Dendritic cell treated with granulocyte-macrophage colony-stimulating factor and Interleukin-4, amounts not matched to agents 40 ng/mL and 50 ng/mL, for 4 days (primary cell): ENCODE measurements at regions of chr18 and their contacts with region 1.

Region 1: DNA sequence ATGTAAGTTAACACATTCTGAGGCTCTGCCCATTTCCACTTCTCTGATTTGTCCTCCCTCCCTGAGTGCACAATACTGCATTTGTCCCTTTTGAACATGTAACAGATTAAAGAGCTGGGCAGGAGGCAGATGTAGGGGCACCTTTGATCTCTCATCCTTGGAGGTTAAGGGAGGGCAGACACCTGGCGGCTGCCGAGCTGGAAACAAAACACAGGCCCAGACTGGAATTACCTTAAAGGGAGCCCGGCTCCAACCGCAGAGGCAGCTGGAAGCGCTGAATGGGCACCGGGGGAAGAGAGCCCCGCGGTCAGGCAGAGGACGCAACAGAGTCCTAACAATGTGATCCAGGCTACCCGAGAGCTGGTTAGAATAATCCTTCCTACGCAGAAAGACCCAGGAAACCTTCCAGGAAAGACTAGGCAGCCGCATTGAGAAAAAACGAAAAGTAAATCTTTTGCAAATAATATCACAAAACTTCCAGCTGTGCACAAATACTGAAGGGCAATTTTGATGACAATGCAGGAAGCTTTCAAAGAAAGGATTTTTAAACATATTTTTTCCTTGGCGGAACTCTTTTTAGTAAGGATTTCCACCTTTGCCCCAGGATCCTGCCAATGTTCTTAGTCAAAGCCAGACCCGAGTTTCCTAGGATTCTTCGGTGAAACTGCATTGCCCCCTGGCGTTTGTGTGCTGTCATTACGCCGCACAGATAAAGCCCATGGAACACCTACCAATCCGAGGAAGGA is 216.0 kb downstream of the TGIF1 start:
- H3K4me3 Mint-ChIP-seq: no peak overlapping the region
- H3K27ac Mint-ChIP-seq: peak overlapping the region; percentile 90
- H3K4me1 Mint-ChIP-seq: peaks cover 45% of the 10 kb centered on the region
- H3K27me3 Mint-ChIP-seq: no peaks in the 10 kb centered on the region

Region 2: GRCh38 chr18:3177902-3178687 is 487.9 kb before region 1 on chr18:
- intact Hi-C with region 1: loop called (anchors 5 kb)
- H3K4me3 Mint-ChIP-seq: peak overlapping the region; percentile 24
- H3K27ac Mint-ChIP-seq: peak overlapping the region; percentile 94
- H3K4me1 Mint-ChIP-seq: peaks cover 51% of the 10 kb centered on the region
- H3K27me3 Mint-ChIP-seq: no peaks in the 10 kb centered on the region

Region 3: GRCh38 chr18:3281456-3282400 is 384.2 kb before region 1 on chr18:
- intact Hi-C with region 1: loop called (anchors 2 kb)
- H3K4me3 Mint-ChIP-seq: no peak overlapping the region
- H3K27ac Mint-ChIP-seq: no peak overlapping the region
- H3K4me1 Mint-ChIP-seq: peaks cover 27% of the 10 kb centered on the region
- H3K27me3 Mint-ChIP-seq: no peaks in the 10 kb centered on the region

Region 4: DNA sequence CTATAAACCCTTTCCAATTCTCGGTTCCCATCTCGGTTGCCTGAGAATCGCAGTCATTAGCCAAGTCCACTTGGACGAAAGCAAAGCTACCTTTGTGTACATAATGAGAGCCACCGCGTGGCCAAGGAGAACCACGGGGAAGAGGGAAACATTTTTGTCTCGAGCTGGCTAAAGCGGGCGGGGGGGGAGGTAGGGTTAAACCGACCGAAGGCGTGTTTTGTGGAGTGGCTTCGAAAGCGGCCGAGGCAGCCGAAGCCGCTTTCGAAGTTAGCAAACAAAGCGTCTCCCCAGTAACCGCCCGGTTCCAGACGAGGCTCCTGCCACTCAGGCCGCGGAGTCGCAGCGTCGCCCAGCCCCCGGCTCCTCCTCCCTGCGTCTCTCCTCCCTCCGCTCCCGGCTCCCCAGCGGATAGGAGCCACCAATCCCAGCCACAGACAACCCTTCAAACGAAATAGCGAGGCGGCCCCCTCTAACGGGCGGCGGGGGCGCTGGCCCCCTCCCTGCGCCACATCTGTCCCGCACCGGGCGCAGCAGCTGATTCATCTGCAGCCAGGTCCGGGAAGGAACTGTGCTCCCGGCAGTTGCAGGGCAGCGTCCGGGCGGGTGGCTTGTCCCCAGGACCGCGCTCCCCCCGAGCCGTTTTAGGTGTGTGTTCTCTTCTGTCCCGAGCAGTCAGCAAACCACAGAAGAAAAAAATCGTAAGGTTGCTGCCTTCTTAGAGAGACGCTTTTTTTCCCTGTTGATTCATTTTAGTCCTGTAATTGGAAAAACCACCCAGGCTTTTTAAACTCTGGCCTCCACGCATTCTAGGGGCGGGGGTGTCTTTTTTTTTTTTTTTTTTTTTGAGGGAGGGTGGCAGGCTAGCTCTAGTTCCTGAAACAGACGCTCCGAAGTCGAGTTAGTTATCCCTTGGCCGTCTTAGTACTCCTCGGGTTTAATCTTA is 217.8 kb before region 1 on chr18:
- intact Hi-C with region 1: loop called (anchors 5 kb)
- H3K4me3 Mint-ChIP-seq: peak overlapping the region; percentile 90
- H3K27ac Mint-ChIP-seq: peak overlapping the region; percentile 99
- H3K4me1 Mint-ChIP-seq: peaks cover 33% of the 10 kb centered on the region
- H3K27me3 Mint-ChIP-seq: no peaks in the 10 kb centered on the region

Region 5: DNA sequence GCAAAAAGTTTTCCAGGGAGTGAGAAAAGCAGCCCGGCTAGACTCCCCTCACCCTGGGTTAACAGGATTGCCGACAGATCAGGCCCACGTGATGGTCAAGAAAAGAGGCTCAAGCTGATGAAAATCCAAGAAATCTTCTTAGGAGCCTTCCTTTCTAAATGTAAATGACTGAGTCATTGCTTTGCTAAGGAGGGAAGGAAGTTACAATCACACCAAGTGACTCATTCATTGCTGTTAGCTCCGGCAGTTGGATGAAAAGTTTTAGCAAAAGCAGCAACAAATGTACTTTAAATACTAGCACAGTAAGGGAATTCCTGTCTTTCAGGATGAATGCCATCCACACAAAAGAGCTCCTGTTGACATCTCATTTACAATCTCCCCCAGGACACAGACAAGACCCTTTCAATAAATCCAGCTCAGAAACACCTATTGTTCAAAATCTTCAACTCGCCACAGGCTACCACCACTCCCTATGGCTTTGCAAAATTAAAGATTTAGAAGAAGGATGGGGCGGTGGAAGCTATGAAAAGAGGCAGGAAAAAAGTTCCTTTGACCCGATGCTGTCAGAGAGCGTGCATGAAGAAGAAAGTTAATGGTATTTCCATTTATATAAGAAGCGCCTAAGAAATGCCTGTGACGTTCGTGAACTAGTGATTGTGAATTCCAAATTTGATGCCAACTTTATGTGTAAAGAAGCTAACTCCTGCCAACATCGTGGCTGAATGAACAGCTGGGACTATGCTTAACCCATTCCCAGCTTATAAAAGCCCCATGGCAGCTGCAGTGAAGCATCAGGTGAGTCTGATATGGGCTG is 62.3 kb before region 1 on chr18:
- intact Hi-C with region 1: loop called (anchors 2 kb)
- H3K4me3 Mint-ChIP-seq: no peak overlapping the region
- H3K27ac Mint-ChIP-seq: no peak overlapping the region
- H3K4me1 Mint-ChIP-seq: no peaks in the 10 kb centered on the region
- H3K27me3 Mint-ChIP-seq: no peaks in the 10 kb centered on the region

Region 6: GRCh38 chr18:3631887-3632286 is 34.1 kb before region 1 on chr18:
- intact Hi-C with region 1: loop called (anchors 1 kb)
- H3K4me3 Mint-ChIP-seq: no peak overlapping the region
- H3K27ac Mint-ChIP-seq: no peak overlapping the region
- H3K4me1 Mint-ChIP-seq: peaks cover 6% of the 10 kb centered on the region
- H3K27me3 Mint-ChIP-seq: no peaks in the 10 kb centered on the region

Region 7: DNA sequence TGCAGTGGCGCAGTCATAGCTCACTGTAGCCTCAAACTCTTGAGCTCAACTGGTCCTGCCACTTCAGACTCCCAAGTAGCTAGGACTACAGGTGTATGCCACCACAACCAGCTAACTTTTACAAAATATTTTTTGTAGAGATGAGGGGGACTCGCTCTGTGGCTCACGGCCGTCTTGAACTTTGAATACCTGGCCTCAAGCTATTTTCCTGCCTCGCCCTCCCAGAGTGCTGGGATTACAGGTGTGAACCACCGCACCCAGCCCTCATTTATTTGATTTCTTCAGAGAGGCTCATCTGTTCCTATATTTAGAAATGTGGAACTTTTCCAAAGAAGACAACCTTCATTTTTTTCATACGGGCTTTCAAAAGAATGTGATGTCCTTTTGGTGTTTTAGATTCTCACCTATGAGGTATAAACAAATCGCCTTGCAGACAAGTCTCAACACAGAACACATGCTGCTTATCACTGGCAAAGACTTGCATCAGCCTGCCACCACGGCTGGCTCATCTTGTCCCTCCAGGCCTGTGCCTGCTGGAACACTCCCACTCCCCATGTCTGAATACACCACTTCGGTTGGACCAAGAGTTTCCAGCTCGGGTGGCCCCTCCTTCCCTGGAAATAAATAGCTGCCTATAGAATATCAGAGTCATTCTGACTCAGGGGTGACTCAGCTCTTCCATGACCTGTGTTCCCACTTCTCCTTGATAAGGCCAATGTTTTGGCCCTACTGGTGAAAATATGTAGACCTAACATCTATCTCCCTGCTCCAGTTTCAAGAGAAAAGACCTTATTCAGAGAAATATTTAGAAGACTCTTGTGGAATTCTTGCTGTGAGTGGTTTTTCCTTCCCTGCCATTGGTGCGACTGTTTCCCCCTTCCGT is 13.3 kb before region 1 on chr18:
- intact Hi-C with region 1: loop called (anchors 2 kb)
- H3K4me3 Mint-ChIP-seq: peak overlapping the region; percentile 4
- H3K27ac Mint-ChIP-seq: peak overlapping the region; percentile 67
- H3K4me1 Mint-ChIP-seq: peaks cover 56% of the 10 kb centered on the region
- H3K27me3 Mint-ChIP-seq: no peaks in the 10 kb centered on the region